ENCODE measurements at regions of chr12 and their contacts with region 1.

Region 1: DNA sequence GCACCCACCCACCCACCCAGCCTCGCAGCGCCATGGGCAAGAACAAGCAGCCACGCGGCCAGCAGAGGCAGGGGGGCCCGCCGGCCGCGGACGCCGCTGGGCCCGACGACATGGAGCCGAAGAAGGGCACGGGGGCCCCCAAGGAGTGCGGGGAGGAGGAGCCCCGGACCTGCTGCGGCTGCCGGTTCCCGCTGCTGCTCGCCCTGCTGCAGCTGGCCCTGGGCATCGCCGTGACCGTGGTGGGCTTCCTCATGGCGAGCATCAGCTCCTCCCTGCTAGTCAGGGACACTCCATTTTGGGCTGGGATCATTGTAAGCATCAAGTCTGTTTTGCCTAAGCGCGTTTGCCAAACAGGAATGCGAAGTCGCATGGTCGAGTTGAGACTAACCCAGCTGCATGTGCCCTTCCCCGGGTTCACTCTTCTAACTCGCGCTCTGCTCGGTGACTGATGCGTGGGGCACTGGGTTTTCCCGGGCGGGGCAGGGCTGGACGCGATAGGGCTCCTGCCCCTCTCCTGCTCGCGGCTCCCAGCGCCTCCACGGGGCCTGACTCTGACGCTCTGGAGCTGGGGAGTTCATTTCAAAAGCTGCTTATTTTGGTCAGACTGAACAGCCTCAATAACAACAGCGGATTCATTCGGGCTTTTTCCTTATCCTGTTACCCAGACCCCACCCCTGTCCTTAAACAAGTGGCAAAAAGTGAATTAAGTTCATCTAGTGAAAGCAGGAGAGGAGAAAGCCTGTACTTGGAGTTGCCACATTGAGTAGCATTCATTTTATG is 458 bp downstream of the SSPN start:
- DNase-seq: no peak
- H3K4me3 ChIP-seq: peak overlapping the region; percentile 59 to 84
- H3K27ac ChIP-seq: peak overlapping the region; percentile 85
- H3K4me1 ChIP-seq: peaks cover 28% of the 10 kb centered on the region
- H3K27me3 ChIP-seq: no peaks in the 10 kb centered on the region
- CTCF ChIP-seq: no peak
- POLR2A ChIP-seq: no peak

Region 2: GRCh38 chr12:25997201-25997963 is 198.4 kb before region 1 on chr12:
- intact Hi-C with region 1: no loop called
- DNase-seq: no peak
- H3K4me3 ChIP-seq: no peak overlapping the region
- H3K27ac ChIP-seq: no peak overlapping the region
- H3K4me1 ChIP-seq: peaks cover 44% of the 10 kb centered on the region
- H3K27me3 ChIP-seq: no peaks in the 10 kb centered on the region
- CTCF ChIP-seq: no peak
- POLR2A ChIP-seq: no peak

Region 3: DNA sequence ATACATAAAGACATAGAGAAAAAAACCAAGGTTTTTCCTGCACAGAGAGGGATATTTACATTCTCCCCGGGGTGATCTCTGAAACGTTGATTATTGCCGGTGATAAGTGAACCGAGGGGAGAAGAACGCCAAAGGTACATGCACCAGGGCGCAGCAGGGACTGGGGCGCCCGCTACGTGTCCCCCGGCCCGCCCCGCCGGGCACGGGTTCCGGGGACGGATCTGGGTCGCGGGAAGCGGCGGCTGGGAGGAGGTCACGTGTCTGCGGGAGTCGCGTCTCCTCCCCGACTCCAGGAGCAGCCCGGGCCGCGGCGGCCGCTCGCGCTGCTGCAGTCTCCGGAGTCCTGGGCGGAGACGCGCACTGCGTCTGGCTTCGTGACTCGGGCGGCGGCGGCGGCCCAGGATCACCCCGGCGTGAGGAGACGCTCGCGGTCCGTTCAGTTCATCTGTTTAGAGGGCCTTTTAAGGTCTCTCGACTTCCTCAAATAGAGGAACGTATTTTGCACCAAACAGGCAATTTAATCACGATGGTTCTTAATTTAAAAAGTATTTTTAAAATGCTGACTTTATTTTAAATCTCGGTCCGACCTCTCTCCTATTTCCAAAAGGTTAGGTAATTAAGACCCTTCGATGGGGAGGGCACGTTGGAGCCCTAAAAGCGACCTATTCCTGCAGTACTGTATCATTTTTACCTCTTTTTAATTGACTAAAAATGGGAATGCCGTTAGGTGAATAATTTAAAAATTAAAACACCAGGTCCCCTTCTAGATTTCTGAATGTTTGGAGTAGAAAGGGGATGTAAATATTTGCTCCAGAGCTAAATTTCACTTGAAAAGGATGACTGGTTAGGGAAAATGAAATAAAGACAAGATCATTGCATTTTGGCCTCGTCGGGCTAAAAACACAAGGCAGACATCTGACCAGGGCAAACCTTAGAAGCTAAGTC is 69.2 kb before region 1 on chr12:
- intact Hi-C with region 1: loop called (anchors 5 kb)
- DNase-seq: no peak
- H3K4me3 ChIP-seq: peak overlapping the region; percentile 70 to 72
- H3K27ac ChIP-seq: peak overlapping the region; percentile 94
- H3K4me1 ChIP-seq: peaks cover 29% of the 10 kb centered on the region
- H3K27me3 ChIP-seq: no peaks in the 10 kb centered on the region
- CTCF ChIP-seq: no peak
- POLR2A ChIP-seq: peak in 1 of 2 donors; percentile 40

Region 4: DNA sequence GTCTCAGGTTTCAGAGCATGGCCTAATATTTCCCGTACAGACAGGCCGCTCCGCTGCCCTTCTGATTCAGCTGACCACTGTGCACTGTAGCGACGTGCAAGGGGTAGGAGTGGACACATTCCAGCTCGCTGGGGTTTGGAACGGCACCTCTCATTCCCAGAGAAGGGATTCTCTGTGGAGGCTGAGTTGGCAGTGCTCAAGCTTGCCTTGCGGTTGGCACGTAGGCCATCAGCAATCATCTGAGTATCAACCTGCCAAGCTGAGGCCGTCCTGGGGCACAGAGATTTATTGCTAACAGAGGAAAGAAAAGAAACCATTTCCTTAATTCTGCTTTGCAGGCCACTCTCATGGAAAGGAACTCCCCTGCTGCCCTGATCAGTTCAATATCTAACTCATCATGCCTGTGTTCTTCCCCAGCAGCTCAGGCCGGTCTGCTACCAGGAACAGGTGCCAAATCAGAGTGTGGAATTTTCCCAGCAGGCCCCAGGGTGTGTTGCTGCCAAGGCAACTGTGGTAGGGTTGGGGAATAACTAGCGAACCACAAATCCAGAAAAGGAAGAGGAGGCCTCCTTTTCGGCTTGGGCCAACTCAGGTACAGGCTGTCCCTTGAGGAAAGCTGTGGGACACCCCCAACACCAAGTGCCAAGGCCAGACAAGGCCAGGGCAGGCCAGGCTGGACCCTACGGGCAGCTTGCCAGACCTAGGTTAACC is 92.0 kb after region 1 on chr12:
- intact Hi-C with region 1: loop called (anchors 10 kb)
- DNase-seq: no peak
- H3K4me3 ChIP-seq: no peak overlapping the region
- H3K27ac ChIP-seq: no peak overlapping the region
- H3K4me1 ChIP-seq: peaks cover 13% of the 10 kb centered on the region
- H3K27me3 ChIP-seq: no peaks in the 10 kb centered on the region
- CTCF ChIP-seq: no peak
- POLR2A ChIP-seq: no peak

Region 5: GRCh38 chr12:26493656-26494055 is 297.8 kb after region 1 on chr12:
- intact Hi-C with region 1: no loop called
- DNase-seq: no peak
- H3K4me3 ChIP-seq: no peak overlapping the region
- H3K27ac ChIP-seq: no peak overlapping the region
- H3K4me1 ChIP-seq: no peaks in the 10 kb centered on the region
- H3K27me3 ChIP-seq: no peaks in the 10 kb centered on the region
- CTCF ChIP-seq: no peak
- POLR2A ChIP-seq: no peak

Region 6: GRCh38 chr12:27277846-27278260 is 1082.0 kb after region 1 on chr12:
- intact Hi-C with region 1: no loop called
- DNase-seq: no peak
- H3K4me3 ChIP-seq: no peak overlapping the region
- H3K27ac ChIP-seq: peak overlapping the region; percentile 81
- H3K4me1 ChIP-seq: peaks cover 77% of the 10 kb centered on the region
- H3K27me3 ChIP-seq: no peaks in the 10 kb centered on the region
- CTCF ChIP-seq: no peak
- POLR2A ChIP-seq: no peak